ENCODE measurements at regions of chr7 and their contacts with region 1.

Region 1: GRCh38 chr7:131945313-131945911 is 389.0 kb upstream of the PODXL start:
- DNase-seq: peak in 1 of 2 experiments; percentile 58
- H3K4me3 ChIP-seq: peak overlapping the region; percentile 18; the same call in 1 of the 2 replicates
- H3K27ac ChIP-seq: no peak overlapping the region
- H3K4me1 ChIP-seq: 0 out of 2 replicates have a peak, but pooled peaks cover 11% of the 10 kb centered on the region
- H3K27me3 ChIP-seq: peaks cover 49% of the 10 kb centered on the region
- CTCF ChIP-seq: peak; percentile 95

Region 2: GRCh38 chr7:131692131-131692960 is 253.1 kb before region 1 on chr7:
- CTCF ChIA-PET with region 1: no interaction called
- POLR2A ChIA-PET with region 1: no interaction called
- intact Hi-C with region 1: no loop called
- DNase-seq: peak in 1 of 2 experiments; percentile 54
- H3K4me3 ChIP-seq: no peak overlapping the region
- H3K27ac ChIP-seq: no peak overlapping the region
- H3K4me1 ChIP-seq: no peaks in the 10 kb centered on the region
- H3K27me3 ChIP-seq: peaks cover 93% of the 10 kb centered on the region
- CTCF ChIP-seq: peak; percentile 90

Region 3: DNA sequence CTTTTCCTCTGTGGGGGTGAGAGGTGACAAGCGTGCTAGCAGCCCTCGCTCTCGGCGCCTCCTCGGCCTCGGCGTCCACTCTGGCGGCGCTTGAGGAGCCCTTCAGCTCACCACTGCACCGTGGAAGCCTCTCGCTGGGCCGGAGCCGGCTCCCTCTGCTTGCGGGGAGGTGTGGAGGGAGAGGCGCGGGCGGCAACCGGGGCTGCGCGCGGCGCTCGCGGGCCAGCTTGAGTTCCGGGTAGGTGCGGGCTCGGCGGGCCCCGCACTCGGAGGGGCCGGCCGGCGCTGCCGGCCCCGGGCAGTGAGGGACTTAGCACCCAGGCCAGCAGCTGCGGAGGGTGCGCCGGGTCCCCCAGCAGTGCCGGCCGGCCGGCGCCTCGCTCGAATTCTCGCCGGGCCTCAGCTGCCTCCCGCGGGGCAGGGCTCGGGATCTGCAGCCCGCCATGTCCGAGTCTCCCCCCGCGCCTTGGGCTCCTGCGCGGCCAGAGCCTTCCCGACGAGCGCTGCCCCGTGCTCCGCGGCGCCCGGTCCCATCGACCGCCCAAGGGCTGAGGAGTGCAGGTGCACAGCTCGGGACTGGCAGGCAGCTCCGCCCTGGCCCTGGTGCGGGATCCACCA is 36.2 kb before region 1 on chr7:
- CTCF ChIA-PET with region 1: no interaction called
- POLR2A ChIA-PET with region 1: no interaction called
- intact Hi-C with region 1: no loop called
- DNase-seq: no peak
- H3K4me3 ChIP-seq: no peak overlapping the region
- H3K27ac ChIP-seq: no peak overlapping the region
- H3K4me1 ChIP-seq: no peaks in the 10 kb centered on the region
- H3K27me3 ChIP-seq: peaks cover 65% of the 10 kb centered on the region
- CTCF ChIP-seq: no peak

Region 4: DNA sequence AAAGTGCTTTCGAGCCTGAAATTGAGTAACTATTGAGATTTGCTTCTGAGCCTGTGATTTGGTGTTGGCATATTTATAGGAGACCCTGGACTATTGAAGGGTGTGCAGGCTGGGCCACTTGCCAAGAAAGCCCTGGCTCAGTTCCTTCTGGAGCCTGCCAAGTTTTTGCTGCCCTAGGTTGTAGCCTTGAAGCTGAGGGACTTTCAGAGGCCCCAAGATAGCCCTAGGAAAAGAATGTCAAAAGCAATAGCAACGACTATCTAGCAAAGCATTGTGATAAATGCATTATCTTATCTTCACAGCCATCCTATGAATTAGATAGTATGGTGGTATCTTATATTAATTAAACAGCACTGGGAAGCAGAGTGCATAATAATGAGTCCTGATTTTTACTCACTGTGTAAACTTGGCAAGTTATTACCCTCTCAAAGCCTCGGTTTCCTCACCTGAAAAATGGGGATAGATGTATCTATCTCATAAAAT is 84.7 kb after region 1 on chr7:
- CTCF ChIA-PET with region 1: no interaction called
- POLR2A ChIA-PET with region 1: interaction called, 3 read pairs
- intact Hi-C with region 1: loop called (anchors 5 kb)
- DNase-seq: peak in 1 of 2 experiments; percentile 69
- H3K4me3 ChIP-seq: no peak overlapping the region; the same call in 1 of the 2 replicates
- H3K27ac ChIP-seq: peak overlapping the region; percentile 66
- H3K4me1 ChIP-seq: peaks cover 38% of the 10 kb centered on the region
- H3K27me3 ChIP-seq: no peaks in the 10 kb centered on the region
- CTCF ChIP-seq: no peak

Region 5: DNA sequence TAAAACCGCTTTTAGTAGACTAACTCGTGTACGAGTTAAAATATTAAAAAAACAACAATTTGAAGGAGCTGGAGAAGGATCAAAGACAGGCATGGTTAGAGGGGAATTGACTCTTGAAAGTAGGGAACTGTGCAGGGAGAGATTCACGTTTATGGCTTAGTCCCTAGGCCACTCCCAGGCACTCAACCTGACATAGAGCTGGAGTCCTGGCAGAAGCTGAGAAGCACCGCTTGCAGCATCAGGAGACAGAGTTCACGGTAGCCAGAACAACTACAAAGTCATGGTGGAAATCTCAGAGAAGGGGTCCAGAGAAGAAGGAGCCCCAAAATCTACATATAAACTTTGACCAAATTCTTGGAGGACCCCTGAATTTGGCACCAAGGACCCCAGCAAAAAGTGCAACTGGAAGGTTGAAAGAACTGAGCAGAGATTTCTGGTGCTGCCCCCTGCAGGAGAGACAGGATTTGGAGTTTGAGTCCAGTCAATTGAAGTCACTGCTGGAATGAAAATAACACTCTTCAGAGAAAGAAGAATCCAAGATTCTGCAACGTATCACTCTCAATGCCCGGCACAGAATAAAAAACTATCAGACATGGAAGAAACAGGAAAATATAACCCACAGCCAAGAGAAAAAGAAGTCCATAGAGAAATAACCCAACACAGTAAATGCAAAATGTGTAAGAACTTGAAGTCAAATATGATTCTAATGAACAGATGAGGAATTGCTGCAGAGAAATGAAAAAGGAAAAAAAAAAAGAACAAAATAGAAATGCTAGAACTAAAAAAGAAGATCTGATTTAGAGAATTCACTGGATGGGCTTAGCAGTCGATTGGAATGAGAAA is 104.3 kb after region 1 on chr7:
- CTCF ChIA-PET with region 1: interaction called, 3 read pairs
- POLR2A ChIA-PET with region 1: no interaction called
- intact Hi-C with region 1: loop called (anchors 5 kb)
- DNase-seq: no peak
- H3K4me3 ChIP-seq: no peak overlapping the region
- H3K27ac ChIP-seq: no peak overlapping the region
- H3K4me1 ChIP-seq: no peaks in the 10 kb centered on the region
- H3K27me3 ChIP-seq: no peaks in the 10 kb centered on the region
- CTCF ChIP-seq: peak; percentile 83

Region 6: DNA sequence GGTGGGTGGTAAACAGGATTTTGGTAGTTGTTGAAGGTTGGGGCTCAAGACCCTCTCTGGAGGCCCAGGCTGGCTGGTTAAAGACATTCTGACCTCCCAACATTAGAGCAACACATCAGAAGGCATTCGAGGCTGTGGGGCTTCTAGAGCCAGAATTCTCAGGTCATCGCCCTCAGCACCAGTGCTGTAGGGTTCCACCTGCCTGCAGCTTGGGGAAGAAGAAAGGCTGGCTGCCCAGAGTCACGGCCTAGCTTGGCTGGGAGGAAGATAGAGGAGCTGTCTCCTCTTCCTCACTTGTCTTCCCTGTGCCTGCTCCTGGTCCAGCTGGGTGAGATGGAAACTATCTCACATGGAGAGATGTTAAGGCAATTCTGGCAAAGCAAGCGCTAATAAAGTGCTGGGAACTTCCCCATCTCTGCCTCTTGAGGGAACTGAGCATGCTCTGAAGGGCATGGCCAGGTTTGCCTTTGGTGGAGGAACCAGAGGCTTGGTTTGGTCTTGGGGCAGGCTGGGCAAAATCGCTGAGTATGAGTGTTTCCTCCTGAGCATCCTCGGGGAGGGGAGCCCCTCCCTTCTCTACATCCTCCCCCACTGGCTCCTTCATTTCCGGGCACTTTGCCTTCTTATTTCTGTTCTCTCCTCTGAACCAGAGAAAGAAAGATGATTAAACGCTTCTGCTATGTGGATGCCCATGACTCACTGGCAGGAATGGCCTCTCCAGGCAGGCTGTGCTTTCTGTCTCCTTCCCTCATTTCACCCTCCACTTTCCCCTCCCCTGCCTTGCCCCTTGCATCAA is 120.0 kb after region 1 on chr7:
- CTCF ChIA-PET with region 1: no interaction called
- POLR2A ChIA-PET with region 1: no interaction called
- intact Hi-C with region 1: loop called (anchors 5 kb)
- DNase-seq: peak; percentile 82 to 85
- H3K4me3 ChIP-seq: no peak overlapping the region
- H3K27ac ChIP-seq: peak overlapping the region; percentile 70
- H3K4me1 ChIP-seq: peaks cover 23% of the 10 kb centered on the region
- H3K27me3 ChIP-seq: no peaks in the 10 kb centered on the region
- CTCF ChIP-seq: no peak

Region 7: DNA sequence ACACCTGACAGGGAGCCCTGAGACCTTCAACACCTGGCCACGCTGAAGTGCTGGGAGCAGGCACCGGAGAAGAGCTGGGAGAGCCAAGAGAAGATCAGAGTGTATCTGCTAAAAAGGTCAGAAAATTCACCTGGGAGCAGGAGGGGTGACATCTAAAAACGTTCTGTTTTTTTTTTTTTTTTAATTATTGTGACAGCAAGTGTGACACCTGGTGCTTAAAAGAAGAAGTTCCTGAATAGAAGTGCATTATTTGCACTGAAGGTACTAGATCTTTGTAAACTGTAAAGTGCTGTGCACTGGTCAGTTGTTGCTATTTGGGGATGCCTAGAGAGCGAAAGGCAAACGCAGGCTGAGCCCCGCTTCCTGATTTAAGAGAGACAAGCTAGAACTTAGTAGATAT is 208.8 kb after region 1 on chr7:
- CTCF ChIA-PET with region 1: no interaction called
- POLR2A ChIA-PET with region 1: no interaction called
- intact Hi-C with region 1: loop called (anchors 1 kb)
- DNase-seq: peak in 1 of 2 experiments; percentile 15
- H3K4me3 ChIP-seq: no peak overlapping the region
- H3K27ac ChIP-seq: no peak overlapping the region
- H3K4me1 ChIP-seq: no peaks in the 10 kb centered on the region
- H3K27me3 ChIP-seq: peaks cover 41% of the 10 kb centered on the region
- CTCF ChIP-seq: peak; percentile 62

Region 8: DNA sequence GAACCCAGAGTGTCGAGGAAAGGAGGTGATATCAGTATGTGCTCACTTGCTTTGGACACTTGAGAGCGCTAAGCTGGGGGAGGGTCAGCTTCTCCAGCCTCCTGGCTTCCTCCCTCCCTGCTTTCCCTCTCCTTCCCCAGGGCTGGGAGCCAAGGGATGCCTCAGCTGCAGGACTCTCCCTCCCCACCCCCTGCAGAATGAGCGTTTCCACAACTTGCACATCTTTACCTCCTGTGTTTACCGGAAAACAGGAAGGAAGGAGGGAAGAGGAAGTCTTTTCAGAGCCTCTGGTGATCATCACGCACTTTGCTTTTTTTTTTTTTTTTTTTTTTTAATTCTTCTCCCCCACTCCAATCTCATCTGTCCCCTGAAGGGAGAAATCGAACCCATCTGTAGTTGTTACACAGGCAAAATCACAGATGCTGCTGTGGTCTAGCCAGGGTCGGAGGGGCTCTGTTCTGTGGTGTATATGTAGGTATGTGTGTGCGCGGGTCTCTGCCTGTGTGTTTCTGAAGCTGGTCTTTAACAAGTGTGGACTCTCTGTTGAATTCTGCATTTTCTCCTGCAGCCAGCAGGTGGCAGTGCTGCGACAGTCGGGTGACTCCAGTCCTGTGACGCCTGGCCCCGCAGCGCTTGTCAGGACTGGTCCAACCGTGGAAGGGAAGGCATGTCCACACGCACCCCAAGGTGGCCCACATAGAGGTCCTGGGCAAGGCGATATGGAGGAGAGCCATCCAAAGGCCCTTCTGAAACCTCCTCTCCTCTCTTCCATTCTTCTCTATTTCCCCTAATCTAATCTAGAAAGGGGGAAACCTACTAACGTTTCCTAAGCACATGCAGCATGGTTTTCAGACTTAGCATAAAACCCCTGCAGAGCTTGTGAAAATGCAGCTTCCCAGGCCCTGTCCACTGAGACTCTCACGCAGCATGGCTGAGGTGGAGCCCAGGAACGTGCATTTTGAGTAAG is 373.2 kb after region 1 on chr7:
- CTCF ChIA-PET with region 1: no interaction called
- POLR2A ChIA-PET with region 1: no interaction called
- intact Hi-C with region 1: loop called (anchors 2 kb)
- DNase-seq: peak; percentile 61 to 72
- H3K4me3 ChIP-seq: no peak overlapping the region
- H3K27ac ChIP-seq: no peak overlapping the region
- H3K4me1 ChIP-seq: no peaks in the 10 kb centered on the region
- H3K27me3 ChIP-seq: peaks cover 67% of the 10 kb centered on the region
- CTCF ChIP-seq: peak; percentile 92

Region 9: DNA sequence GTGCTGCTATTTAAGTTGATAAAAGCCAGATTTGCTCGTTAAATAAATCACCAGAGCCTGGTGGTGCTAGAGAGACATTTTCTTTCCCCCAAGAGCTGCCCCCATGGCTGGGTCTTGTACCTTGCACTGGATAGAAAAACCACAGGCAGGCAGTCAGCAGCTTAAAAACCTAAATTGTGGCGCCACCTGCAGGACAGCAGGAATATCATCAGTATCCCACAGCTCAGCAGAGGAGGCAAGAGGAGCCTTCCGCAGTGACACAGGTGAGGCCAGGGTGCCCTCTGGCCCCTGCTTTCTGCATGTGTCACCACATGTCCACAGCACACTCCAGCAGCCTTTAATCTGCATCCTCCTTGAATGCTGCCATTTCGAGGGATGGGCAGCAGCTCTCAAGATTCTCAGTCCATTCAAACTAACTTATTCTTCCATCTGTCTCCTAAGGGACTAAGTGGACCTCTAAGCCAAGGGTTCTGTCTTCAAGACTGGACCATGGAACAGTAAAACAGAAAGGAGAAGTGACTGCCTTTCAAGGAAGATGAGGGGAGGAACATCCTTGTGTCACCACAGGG is 635.4 kb after region 1 on chr7:
- CTCF ChIA-PET with region 1: no interaction called
- POLR2A ChIA-PET with region 1: no interaction called
- intact Hi-C with region 1: loop called (anchors 1 kb)
- DNase-seq: peak; percentile 47 to 52
- H3K4me3 ChIP-seq: no peak overlapping the region
- H3K27ac ChIP-seq: no peak overlapping the region
- H3K4me1 ChIP-seq: no peaks in the 10 kb centered on the region
- H3K27me3 ChIP-seq: peaks cover 44% of the 10 kb centered on the region; the same call in 1 of the 2 replicates
- CTCF ChIP-seq: peak; percentile 86